ENCODE measurements at regions of chr3 and their contacts with region 1.

Region 1: DNA sequence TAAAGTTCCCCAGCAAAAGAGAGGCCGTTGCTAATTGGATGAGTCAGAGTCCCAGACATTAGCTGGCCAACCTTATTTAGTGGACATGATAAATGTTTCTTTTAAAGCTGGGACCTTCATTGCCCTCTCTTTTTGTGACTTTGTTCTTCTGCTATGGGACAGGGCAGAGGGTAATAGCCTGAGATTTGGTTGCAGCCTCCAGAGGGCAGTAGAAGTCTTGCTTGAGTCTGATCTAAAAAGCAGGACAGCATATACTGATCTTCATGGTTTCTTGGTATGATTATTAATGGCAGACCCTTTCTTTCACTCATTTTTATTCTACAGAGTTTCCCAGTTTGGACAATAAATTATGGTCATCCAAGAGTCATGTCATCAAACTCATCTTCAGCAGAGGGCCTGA is 25.1 kb upstream of the ZKSCAN7 start:
- DNase-seq: no peak
- ATAC-seq: no peak
- H3K4me3 ChIP-seq: no peak overlapping the region
- H3K27ac ChIP-seq: no peak overlapping the region
- H3K4me1 ChIP-seq: no peaks in the 10 kb centered on the region
- H3K27me3 ChIP-seq: peaks cover 0 to 5% (median 0%) of the 10 kb centered on the region in 4 donors
- CTCF ChIP-seq: no peak

Region 2: DNA sequence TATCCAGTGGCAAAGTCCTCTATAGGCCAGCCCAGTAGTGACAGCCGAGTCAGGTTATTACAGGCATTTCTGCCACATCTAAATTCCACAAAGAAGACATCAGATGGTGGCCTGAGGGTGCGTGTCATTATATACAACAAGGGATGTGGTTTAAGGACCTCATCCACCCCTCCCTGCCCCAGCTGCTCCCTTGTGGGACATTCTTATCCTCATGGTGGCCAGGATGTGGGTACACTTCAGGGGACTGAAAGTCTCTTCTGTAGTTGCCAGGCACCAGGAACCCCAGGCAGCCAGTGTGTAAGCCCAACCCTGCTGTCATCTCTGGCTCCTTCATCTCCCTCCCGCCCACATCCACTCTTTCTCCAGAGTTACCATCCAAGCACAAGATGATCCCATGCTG is 513.1 kb before region 1 on chr3:
- intact Hi-C with region 1: no loop called
- DNase-seq: no peak
- ATAC-seq: no peak
- H3K4me3 ChIP-seq: no peak overlapping the region
- H3K27ac ChIP-seq: no peak overlapping the region
- H3K4me1 ChIP-seq: peaks cover 0 to 2% (median 0%) of the 10 kb centered on the region in 3 donors
- H3K27me3 ChIP-seq: peaks cover 0 to 7% (median 2%) of the 10 kb centered on the region in 4 donors
- CTCF ChIP-seq: no peak

Region 3: DNA sequence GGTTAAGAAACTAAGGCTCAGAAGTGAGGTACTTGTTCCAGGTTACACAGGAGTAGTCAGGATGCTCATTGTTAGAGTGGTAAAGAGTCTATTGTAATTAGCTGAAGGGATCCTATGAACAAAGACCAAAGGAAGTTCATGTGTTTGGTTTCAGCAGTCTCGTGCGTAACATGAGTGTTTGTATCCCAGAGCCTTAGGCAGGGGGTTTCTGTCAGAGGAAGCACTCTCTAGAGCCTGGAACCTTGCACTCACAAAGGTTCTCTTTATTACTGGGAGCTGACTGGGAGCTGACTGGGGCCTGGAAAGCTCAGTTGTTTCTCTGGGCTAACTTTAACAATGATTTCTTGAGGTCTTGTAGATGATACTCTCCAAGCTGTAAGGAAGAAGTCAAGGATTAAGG is 98.8 kb after region 1 on chr3:
- intact Hi-C with region 1: no loop called
- DNase-seq: no peak
- ATAC-seq: no peak
- H3K4me3 ChIP-seq: no peak overlapping the region
- H3K27ac ChIP-seq: no peak overlapping the region
- H3K4me1 ChIP-seq: peaks cover 7 to 19% (median 12%) of the 10 kb centered on the region in 3 donors
- H3K27me3 ChIP-seq: no peaks in the 10 kb centered on the region
- CTCF ChIP-seq: no peak

Region 4: DNA sequence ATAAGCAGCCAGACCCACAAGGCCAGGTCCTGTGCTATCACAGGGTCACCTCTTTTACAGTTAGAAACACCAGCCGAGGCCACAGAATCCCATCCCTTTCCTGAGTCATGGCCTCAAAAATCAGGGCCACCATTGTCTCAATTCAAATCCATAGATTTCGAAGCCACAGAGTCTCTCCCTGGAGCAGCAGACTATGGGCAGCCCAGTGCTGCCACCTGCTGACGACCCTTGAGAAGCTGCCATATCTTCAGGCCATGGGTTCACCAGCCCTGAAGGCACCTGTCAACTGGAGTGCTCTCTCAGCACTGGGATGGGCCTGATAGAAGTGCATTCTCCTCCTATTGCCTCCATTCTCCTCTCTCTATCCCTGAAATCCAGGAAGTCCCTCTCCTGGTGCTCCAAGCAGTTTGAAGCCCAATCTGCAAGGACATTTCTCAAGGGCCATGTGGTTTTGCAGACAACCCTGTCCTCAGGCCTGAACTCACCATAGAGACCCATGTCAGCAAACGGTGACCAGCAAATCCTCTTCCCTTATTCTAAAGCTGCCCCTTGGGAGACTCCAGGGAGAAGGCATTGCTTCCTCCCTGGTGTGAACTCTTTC is 384.0 kb after region 1 on chr3:
- intact Hi-C with region 1: loop called (anchors 2 to 10 kb)
- DNase-seq: peak; percentile 38 to 83 (median 68)
- ATAC-seq: peak; percentile 71 to 98 (median 90)
- H3K4me3 ChIP-seq: no peak overlapping the region
- H3K27ac ChIP-seq: no peak overlapping the region
- H3K4me1 ChIP-seq: no peaks in the 10 kb centered on the region
- H3K27me3 ChIP-seq: no peaks in the 10 kb centered on the region
- CTCF ChIP-seq: peak; percentile 51 to 83 (median 74)

Measured in pancreas (tissue), 10 donors.